CD4-positive, alpha-beta memory T cell (primary cell): ENCODE measurements at regions of chr19 and their contacts with region 1.

Region 1: DNA sequence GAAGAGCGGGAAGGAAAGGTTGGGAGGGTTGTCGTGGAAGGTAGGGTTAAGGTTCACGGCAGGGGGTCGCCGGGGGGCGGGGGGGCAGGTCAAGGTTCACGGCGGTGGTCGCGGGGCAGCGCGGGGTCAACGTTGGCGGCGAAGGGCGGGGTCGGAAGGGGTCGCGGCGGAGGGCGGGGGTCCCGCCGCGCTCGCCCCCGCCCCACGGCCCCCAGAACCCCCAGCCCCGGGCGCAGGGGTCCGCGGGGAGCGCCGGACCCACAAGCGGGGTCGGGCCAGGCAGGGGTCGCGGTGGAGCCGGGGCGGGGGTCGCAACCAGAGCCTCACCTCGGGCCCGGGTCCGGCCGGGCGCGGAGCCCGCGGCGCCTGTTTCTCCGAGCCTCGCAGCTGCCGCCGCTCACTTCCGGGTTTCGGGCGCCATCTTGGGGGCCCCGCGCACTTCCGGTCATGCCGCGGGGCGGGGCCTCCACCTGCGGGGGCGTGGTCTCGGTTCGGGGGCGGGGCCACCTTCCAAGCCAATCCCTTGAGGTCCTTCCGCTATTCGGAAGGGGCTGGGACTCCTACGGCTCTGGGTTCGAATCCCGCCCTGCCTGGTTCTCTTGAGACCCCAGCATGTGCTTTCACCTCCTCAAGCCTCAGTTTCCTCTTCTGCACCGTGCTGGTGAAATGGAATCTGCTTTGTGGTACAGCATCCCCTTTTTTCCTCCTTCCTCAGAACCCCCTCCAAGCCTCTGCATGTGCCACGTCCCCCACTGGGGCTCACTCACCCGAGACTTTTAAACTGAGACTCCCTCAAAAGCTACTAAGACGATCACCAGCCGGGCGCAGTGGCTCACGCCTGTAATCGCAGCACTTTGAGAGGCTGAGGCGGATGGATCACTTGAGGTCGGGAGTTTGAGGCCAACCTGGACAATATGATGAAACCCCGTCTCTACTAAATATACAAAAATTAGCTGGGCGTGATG is at the start of gene SBNO2:
- DNase-seq: peak; percentile 81 to 90 (median 87)
- H3K4me3 ChIP-seq: peak within 1 kb of the TSS; percentile 42 to 73
- H3K4me3 Mint-ChIP-seq: peak within 1 kb of the TSS; percentile 89 to 93 (median 90)
- H3K27ac ChIP-seq: peak within 1 kb of the TSS; percentile 65
- H3K27ac Mint-ChIP-seq: peak within 1 kb of the TSS; percentile 87 to 97 (median 94)
- H3K4me1 ChIP-seq: peaks cover 42% of the 10 kb centered on the region
- H3K4me1 Mint-ChIP-seq: peaks cover 16 to 37% (median 27%) of the 10 kb centered on the region in 4 donors
- H3K27me3 ChIP-seq: no peaks in the 10 kb centered on the region
- H3K27me3 Mint-ChIP-seq: no peaks in the 10 kb centered on the region
- total RNA-seq, gene SBNO2: 92.6 to 98.6 TPM

Region 2: GRCh38 chr19:1103708-1104310 is 70.3 kb before region 1 on chr19 and contains the start of gene GPX4:
- CTCF ChIA-PET with region 1: no interaction called
- POLR2A ChIA-PET with region 1: interaction called, 5 read pairs
- intact Hi-C with region 1: loop called (anchors 5 kb)
- DNase-seq: peak; percentile 94 to 98 (median 97)
- H3K4me3 ChIP-seq: peak within 1 kb of the TSS; percentile 47 to 76
- H3K4me3 Mint-ChIP-seq: peak within 1 kb of the TSS; percentile 73 to 86 (median 77)
- H3K27ac ChIP-seq: peak within 1 kb of the TSS; percentile 96
- H3K27ac Mint-ChIP-seq: peak within 1 kb of the TSS; percentile 92 to 97 (median 96)
- H3K4me1 ChIP-seq: peaks cover 43% of the 10 kb centered on the region
- H3K4me1 Mint-ChIP-seq: peaks cover 14 to 51% (median 33%) of the 10 kb centered on the region in 4 donors
- H3K27me3 ChIP-seq: no peaks in the 10 kb centered on the region
- H3K27me3 Mint-ChIP-seq: no peaks in the 10 kb centered on the region
- total RNA-seq, gene GPX4: 210 to 220 TPM

Region 3: GRCh38 chr19:1154731-1155351 is 19.3 kb before region 1 on chr19:
- CTCF ChIA-PET with region 1: no interaction called
- POLR2A ChIA-PET with region 1: no interaction called
- intact Hi-C with region 1: no loop called
- DNase-seq: no peak
- H3K4me3 ChIP-seq: no peak overlapping the region
- H3K4me3 Mint-ChIP-seq: no peak overlapping the region
- H3K27ac ChIP-seq: no peak overlapping the region
- H3K27ac Mint-ChIP-seq: no peak overlapping the region
- H3K4me1 ChIP-seq: no peaks in the 10 kb centered on the region
- H3K4me1 Mint-ChIP-seq: peaks cover 0 to 3% (median under 1%) of the 10 kb centered on the region in 4 donors
- H3K27me3 ChIP-seq: no peaks in the 10 kb centered on the region
- H3K27me3 Mint-ChIP-seq: no peaks in the 10 kb centered on the region